Activated T-helper 1 cell treated with anti-CD3 and anti-CD28 coated beads, Interleukin-12 subunit alpha, Interleukin-12 subunit beta, Interleukin-2, Interleukin-4 antibody, amounts not matched to agents 30 ng/mL and 10 ng/mL and 1 ng/mL, durations not matched to agents 14 hours and 24 hours and 36 hours (primary cell): ENCODE measurements at regions of chr2 and their contacts with region 1.

Region 1: DNA sequence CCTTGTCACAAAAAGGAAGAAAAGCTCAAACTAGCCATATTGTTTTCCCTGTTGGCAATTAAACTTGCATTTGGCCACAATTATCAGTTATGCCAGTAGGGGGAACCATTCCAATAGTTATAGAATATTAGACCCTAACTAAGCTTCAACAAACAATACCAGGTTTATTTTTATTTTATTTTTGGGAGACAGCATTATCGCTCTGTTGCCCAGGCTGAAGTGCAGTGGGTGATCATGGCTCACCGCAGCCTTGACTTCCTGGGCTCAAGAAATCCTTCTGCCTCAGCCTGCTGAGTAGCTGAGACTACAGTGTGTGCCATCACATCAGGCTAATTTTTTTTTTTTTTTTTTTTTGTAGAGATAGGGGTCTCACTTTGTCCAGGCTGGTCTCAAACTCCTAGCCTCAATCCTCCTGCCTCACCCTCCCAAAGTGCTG is 102.1 kb downstream of the ATAD2B start:
- DNase-seq: no peak
- H3K4me3 Mint-ChIP-seq: no peak overlapping the region
- H3K27ac Mint-ChIP-seq: no peak overlapping the region
- H3K4me1 Mint-ChIP-seq: no peaks in the 10 kb centered on the region
- H3K27me3 Mint-ChIP-seq: no peaks in the 10 kb centered on the region

Region 2: GRCh38 chr2:23803965-23804542 is 20.7 kb before region 1 on chr2:
- intact Hi-C with region 1: loop called (anchors 1 kb)
- DNase-seq: no peak
- H3K4me3 Mint-ChIP-seq: no peak overlapping the region
- H3K27ac Mint-ChIP-seq: no peak overlapping the region
- H3K4me1 Mint-ChIP-seq: peaks cover 5% of the 10 kb centered on the region
- H3K27me3 Mint-ChIP-seq: no peaks in the 10 kb centered on the region

Region 3: DNA sequence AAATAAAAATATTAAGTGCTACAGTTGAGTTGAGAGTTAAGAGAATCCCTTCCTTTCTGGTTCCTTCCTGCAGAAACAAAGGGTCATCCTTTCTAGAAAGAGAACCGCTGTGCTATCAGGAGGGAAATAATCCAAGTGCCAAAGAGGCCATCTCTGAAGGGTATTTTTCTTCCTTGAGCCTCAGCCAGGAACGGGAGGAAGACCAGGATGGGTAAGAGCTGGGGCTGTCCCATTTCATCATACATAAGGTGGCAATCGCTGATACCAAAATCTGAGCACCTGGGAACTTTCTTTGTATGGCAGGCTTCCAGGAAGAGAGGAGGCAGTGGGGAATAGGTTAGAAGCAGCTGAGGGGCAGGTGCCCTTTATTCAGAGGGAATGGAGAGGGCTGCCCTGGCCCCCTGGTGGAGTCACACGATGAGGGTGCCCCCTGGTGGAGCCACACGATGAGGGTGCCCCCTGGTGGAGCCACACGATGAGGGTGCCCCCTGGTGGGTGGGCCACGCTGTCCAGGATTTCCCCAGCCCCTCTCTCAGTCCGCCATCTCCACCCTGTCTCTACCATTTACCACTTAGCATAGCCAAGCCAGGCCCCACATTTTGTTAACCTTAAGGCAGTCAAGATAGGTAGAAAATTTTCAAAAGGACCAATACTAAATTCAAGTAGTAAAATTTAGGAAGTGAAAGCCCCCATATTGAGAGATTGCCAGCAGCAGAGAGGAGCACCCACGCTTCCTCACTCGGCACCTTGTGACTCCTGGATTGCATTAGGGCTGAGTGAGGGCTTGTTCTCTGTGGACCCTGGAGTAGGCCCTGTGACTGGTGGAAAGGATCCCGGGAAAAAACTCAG is 339.6 kb after region 1 on chr2:
- intact Hi-C with region 1: loop called (anchors 1 kb)
- DNase-seq: no peak
- H3K4me3 Mint-ChIP-seq: no peak overlapping the region
- H3K27ac Mint-ChIP-seq: no peak overlapping the region
- H3K4me1 Mint-ChIP-seq: no peaks in the 10 kb centered on the region
- H3K27me3 Mint-ChIP-seq: peaks cover 11% of the 10 kb centered on the region